ENCODE measurements at regions of chr16 and their contacts with region 1.

Region 1: DNA sequence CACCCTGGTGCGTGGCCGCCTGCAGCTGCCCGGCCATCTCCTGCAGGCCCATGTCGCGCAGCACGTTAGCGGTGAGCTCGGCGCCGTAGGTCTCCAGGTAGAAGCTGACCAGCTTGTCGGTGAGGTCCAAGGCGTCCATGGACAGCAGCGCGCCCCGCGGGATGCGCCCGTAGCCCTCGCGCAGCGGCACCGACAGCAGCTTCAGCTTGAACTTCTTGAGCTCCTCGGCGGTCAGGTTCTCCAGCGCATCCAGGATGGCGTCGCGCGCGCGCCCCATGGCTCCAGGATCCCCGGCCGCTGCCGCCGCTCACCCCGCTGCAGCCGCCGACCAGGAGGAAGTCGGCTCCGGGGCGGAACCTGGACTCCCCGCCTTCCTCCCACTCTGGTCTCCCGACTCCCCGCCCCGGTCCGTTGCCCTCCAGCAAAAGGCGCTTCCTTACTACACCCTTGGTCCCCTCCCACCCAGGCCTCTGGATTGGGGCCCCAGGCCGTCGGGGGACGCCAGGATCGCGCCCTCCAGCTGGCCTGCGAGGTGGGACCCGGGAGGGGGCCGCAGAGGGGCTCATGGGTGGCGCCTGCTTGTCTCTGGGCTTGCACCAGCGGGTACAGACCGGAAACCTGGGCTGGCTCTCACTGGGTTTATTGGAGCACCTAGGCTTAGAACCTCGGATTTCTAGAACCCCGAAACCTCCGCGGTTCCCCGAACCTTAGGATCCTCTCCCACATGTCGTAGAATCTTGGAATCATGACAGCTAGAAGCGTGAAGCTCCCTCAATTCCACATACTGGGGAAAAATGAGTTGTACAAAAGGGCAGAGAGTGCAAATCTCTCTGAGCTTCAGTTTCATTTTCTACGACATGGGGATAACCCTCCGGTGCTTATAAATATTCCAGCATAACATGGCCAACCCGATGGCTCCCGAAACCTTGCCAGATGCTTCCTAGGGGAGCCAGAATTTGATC is at the start of gene PYCARD:
- DNase-seq: peak; percentile 86
- H3K4me3 Mint-ChIP-seq: peak within 1 kb of the TSS; percentile 89
- H3K27ac Mint-ChIP-seq: peak within 1 kb of the TSS; percentile 87
- H3K4me1 Mint-ChIP-seq: peaks cover 54% of the 10 kb centered on the region
- H3K27me3 Mint-ChIP-seq: peaks cover 1% of the 10 kb centered on the region
- total RNA-seq, gene PYCARD: 15.6 and 17.1 TPM in 2 replicates

Region 2: GRCh38 chr16:31221357-31222160 is 18.9 kb after region 1 on chr16:
- intact Hi-C with region 1: no loop called
- DNase-seq: no peak
- H3K4me3 Mint-ChIP-seq: no peak overlapping the region
- H3K27ac Mint-ChIP-seq: no peak overlapping the region
- H3K4me1 Mint-ChIP-seq: peaks cover 8% of the 10 kb centered on the region
- H3K27me3 Mint-ChIP-seq: peaks cover 34% of the 10 kb centered on the region

Region 3: GRCh38 chr16:31265329-31266245 is 62.9 kb after region 1 on chr16:
- intact Hi-C with region 1: loop called (anchors 5 kb)
- DNase-seq: peak; percentile 91
- H3K4me3 Mint-ChIP-seq: peak overlapping the region; percentile 83
- H3K27ac Mint-ChIP-seq: peak overlapping the region; percentile 94
- H3K4me1 Mint-ChIP-seq: peaks cover 60% of the 10 kb centered on the region
- H3K27me3 Mint-ChIP-seq: no peaks in the 10 kb centered on the region

Region 4: GRCh38 chr16:31333686-31334649 is 131.3 kb after region 1 on chr16:
- intact Hi-C with region 1: loop called (anchors 2 kb)
- DNase-seq: peak; percentile 79
- H3K4me3 Mint-ChIP-seq: no peak overlapping the region
- H3K27ac Mint-ChIP-seq: no peak overlapping the region
- H3K4me1 Mint-ChIP-seq: peaks cover 23% of the 10 kb centered on the region
- H3K27me3 Mint-ChIP-seq: peaks cover 14% of the 10 kb centered on the region

Region 5: DNA sequence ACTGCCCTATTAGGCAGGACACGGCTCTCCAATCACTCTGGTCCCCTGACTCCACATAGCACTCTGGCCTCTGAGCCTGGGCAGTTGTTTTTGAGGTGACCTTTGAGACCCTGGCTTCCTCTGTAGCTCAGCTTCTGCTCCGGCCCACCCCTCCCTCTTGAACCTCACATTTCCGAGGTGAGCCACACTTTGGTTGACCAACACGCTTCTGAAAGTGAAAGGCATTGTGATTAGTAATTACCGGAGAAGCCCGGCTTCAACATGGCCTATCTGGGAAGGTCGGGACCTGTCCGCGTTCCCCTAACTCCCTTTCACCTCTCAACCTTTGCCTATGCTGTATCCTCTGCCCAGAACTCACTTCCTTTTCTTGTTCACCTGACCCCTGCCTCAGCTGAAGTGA is 142.0 kb after region 1 on chr16:
- intact Hi-C with region 1: no loop called
- DNase-seq: no peak
- H3K4me3 Mint-ChIP-seq: peak overlapping the region; percentile 30
- H3K27ac Mint-ChIP-seq: peak overlapping the region; percentile 64
- H3K4me1 Mint-ChIP-seq: peaks cover 24% of the 10 kb centered on the region
- H3K27me3 Mint-ChIP-seq: peaks cover 17% of the 10 kb centered on the region

Region 6: DNA sequence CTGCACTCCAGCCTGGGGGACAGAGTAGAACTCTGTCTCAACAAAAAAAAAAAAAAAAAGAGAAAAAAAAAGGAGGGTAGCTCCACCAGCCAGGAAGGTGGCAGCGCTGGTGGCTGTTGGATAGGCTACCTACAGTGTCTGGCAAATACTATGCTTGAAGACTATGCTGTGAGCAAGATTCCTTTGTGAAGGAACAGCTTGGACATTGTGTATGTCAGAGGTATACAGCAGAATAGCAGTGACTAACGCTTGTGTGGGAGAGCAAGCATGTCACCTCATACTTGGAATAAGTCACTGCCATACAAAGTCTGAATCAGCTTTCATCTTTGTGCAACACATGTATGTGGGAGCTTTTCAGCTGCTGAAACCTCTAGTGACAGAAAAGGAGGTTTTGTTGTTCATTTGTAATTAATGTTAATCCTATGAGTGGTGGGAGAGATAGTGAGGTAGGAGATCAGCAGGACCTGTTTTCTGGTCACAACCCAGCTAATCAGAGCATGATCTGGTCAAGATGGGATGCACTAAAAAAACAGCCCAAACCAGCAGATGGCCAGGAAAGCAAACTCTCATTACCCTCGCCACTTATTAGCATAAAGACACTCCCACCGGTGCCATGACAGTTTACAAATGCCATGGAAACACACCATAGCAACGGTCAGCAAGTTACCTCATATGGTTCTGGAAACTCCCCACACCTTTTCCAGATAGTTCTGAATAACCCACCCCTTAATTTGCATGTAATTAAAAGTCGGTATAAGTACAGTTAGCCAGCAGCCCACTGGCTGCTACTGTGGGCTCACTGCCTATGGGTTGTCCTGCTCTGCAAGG is 183.7 kb after region 1 on chr16:
- intact Hi-C with region 1: loop called (anchors 2 kb)
- DNase-seq: peak; percentile 64
- H3K4me3 Mint-ChIP-seq: peak overlapping the region; percentile 6
- H3K27ac Mint-ChIP-seq: peak overlapping the region; percentile 77
- H3K4me1 Mint-ChIP-seq: peaks cover 30% of the 10 kb centered on the region
- H3K27me3 Mint-ChIP-seq: peaks cover 15% of the 10 kb centered on the region

Region 7: GRCh38 chr16:31868691-31869167 is 666.0 kb after region 1 on chr16:
- intact Hi-C with region 1: loop called (anchors 2 kb)
- DNase-seq: peak; percentile 94
- H3K4me3 Mint-ChIP-seq: peak overlapping the region; percentile 75
- H3K27ac Mint-ChIP-seq: peak overlapping the region; percentile 95
- H3K4me1 Mint-ChIP-seq: peaks cover 53% of the 10 kb centered on the region
- H3K27me3 Mint-ChIP-seq: peaks cover 5% of the 10 kb centered on the region

Measured in activated CD4-positive, alpha-beta T cell treated with anti-CD3 and anti-CD28 coated beads, Interleukin-2, amount 10 ng/mL, durations not matched to agents 24 days and 14 days (primary cell).